ENCODE measurements at regions of chr18 and their contacts with region 1.

Region 1: DNA sequence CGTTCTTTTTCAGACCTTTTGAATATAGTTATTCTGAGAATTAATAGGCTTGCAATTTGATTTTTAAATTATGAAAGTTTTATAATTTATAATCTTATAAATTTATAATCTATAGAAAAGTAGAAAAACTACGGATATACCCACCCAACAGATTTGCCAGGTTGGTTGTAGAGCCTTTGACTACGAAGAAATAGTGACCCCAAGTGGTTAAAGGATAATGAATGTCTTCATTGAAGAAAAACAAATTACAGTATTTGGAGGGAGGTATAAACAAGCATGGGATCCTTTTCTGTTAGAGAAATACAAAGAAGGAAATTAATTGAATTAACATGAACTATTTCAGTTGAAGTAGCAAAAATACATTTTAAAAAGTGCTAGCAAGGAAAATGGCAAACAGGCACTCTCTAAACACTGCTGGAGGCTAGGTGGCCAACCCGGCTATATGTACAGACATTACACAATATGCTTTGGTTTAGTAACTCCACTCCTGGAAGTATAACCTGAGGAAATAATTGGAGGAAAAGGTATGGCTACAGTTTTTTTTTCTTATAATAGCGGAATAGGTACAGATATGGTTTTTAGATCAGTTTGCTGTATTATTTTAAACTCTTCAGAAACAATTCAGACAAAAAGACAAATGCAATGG is 110.9 kb downstream of the MIB1 start:
- DNase-seq: no peak
- H3K4me3 ChIP-seq: peak overlapping the region in 2 of 4 donors; percentile 3 to 17
- H3K27ac ChIP-seq: no peak overlapping the region
- H3K4me1 ChIP-seq: peaks cover 0 to 5% (median 0%) of the 10 kb centered on the region in 4 donors
- H3K27me3 ChIP-seq: no peaks in the 10 kb centered on the region
- CTCF ChIP-seq: peak in 2 of 4 experiments; percentile 8 to 38
- EP300 ChIP-seq: no peak
- POLR2A ChIP-seq: no peak

Region 2: DNA sequence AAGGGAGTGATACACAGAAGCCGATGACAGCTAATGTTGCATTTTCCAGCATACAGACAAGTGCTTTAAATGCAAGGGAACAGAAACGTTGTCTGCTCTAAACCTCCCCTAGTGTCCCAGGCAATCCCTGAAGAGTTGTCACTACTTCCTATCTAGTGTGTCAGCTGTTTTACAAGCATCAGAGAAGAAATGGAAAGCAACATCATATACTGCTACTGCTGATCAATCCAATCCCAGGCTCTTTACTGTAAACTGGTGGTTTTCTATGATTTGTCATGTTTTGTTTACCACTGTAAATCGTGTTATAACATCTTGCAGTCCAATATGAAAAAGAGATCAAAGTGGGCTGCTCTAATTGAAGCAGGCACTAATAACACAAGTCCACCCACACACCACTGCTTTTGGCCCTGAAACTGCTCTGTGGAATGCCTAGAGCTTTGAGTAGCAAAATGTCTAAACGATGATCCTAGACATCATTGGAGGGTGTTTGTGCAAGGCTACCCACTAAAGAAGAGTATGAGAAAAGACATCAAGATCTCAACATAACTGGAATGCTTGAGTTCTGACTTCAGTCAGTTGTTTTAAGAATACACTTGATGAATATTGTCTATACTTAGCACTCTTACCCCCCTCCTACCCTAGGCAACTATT is 721.8 kb before region 1 on chr18:
- intact Hi-C with region 1: no loop called
- DNase-seq: no peak
- H3K4me3 ChIP-seq: no peak overlapping the region
- H3K27ac ChIP-seq: no peak overlapping the region
- H3K4me1 ChIP-seq: no peaks in the 10 kb centered on the region
- H3K27me3 ChIP-seq: no peaks in the 10 kb centered on the region
- CTCF ChIP-seq: no peak
- EP300 ChIP-seq: no peak
- POLR2A ChIP-seq: no peak

Region 3: GRCh38 chr18:21612125-21612991 is 239.1 kb before region 1 on chr18 and contains the start of gene SNRPD1:
- intact Hi-C with region 1: loop called (anchors 5 kb)
- DNase-seq: peak; percentile 89
- H3K4me3 ChIP-seq: peak within 1 kb of the TSS; percentile 41 to 69 (median 63)
- H3K27ac ChIP-seq: peak within 1 kb of the TSS; percentile 76 to 83 (median 78)
- H3K4me1 ChIP-seq: peaks cover 0 to 22% (median 15%) of the 10 kb centered on the region in 4 donors
- H3K27me3 ChIP-seq: no peaks in the 10 kb centered on the region
- CTCF ChIP-seq: peak; percentile 69 to 92 (median 90)
- EP300 ChIP-seq: no peak
- POLR2A ChIP-seq: no peak
- total RNA-seq, gene SNRPD1: 5.2 to 10.3 (median 6.5) TPM